ENCODE measurements at regions of chr11 and their contacts with region 1.

Region 1: DNA sequence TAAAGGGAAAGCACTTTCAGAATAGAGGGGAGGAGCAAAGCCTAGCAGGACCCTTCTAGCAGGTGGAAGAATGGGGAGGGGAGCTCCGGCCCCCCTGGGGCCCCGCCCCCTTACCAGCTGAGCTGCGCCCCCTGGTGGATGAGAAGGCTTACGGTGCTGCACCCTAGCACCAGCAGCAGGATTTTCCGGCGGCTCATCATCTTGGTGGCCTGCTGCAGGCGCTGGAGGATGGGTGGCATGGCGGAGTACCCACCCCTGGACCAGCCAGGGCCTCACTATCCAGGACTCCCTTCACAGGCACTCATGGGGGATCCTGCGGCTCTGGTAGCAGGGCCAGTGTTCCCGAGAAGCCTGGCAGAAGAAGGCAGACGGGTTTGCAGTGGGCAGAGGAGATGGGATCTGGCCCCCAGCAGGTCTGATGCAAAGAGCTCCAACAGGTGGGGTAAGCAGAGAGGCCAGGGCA is 3.8 kb downstream of the GAL3ST3 start:
- DNase-seq: no peak
- ATAC-seq: peak; percentile 92
- H3K4me3 ChIP-seq: no peak overlapping the region
- H3K27ac ChIP-seq: no peak overlapping the region
- H3K4me1 ChIP-seq: peaks cover 3% of the 10 kb centered on the region; the same call in 1 of the 2 replicates
- H3K27me3 ChIP-seq: no peaks in the 10 kb centered on the region
- CTCF ChIP-seq: peak; percentile 99

Region 2: DNA sequence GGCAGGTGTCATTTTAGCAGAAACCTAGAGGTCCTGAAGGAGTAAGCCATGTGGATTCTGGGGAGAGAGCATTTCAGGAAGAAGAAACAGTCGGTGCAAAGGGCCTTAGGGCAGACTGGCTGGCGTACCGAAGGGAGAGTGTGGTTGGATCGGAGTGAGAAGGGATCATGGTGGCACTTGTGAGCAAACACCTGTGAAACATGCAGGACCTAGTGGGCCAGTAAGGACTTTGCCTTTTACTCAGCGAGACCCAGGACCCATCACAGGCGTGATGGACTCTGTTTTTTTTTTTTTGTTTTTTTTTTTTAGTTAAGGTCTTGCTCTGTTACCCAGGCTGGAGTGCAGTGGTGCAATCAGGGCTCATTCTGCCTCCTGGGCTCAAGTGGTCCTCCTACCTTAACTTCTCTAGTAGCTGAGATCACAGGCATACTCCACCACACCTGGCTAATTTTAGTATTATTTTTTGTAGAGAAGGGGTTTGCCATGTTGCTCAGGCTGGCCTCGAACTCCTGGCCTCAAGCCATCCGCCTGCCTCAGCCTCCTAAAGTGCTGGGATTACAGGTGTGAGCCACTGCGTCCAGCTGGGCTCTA is 103.4 kb before region 1 on chr11:
- CTCF ChIA-PET with region 1: interaction called, 12 read pairs
- POLR2A ChIA-PET with region 1: no interaction called
- in situ Hi-C with region 1: no loop called
- intact Hi-C with region 1: no loop called
- DNase-seq: no peak
- ATAC-seq: no peak; the same call in 1 of the 2 replicates
- H3K4me3 ChIP-seq: no peak overlapping the region
- H3K27ac ChIP-seq: no peak overlapping the region
- H3K4me1 ChIP-seq: no peaks in the 10 kb centered on the region
- H3K27me3 ChIP-seq: no peaks in the 10 kb centered on the region
- CTCF ChIP-seq: no peak

Region 3: DNA sequence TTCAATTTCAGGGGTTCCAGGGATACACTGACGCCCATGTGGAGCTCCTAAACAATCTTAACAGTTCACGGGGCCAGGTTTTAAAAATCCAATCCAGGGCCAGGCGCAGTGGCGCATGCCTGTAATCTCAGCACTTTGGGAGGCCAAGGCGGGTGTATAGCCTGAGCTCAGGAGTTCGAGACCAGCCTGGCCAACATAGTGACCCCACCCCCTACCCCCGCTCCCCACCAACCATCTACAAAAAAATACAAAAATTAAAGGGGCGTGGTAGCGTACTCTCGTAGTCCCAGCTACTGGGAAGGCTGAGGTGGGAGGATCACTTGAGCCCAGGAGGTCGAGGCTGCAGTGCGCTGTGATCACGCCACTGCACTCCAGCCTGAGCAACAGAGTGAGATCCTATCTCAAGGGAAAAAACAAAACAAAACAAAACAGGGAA is 84.4 kb before region 1 on chr11:
- CTCF ChIA-PET with region 1: no interaction called
- POLR2A ChIA-PET with region 1: no interaction called
- in situ Hi-C with region 1: no loop called
- intact Hi-C with region 1: no loop called
- DNase-seq: no peak
- ATAC-seq: peak; percentile 26
- H3K4me3 ChIP-seq: peak overlapping the region; percentile 82 to 89
- H3K27ac ChIP-seq: peak overlapping the region; percentile 99
- H3K4me1 ChIP-seq: peaks cover 11% of the 10 kb centered on the region
- H3K27me3 ChIP-seq: no peaks in the 10 kb centered on the region
- CTCF ChIP-seq: no peak

Region 4: GRCh38 chr11:66032962-66033735 is 12.1 kb before region 1 on chr11:
- CTCF ChIA-PET with region 1: interaction called, 12 read pairs
- POLR2A ChIA-PET with region 1: no interaction called
- in situ Hi-C with region 1: no loop called
- intact Hi-C with region 1: no loop called
- DNase-seq: no peak
- ATAC-seq: peak; percentile 43
- H3K4me3 ChIP-seq: no peak overlapping the region
- H3K27ac ChIP-seq: no peak overlapping the region
- H3K4me1 ChIP-seq: no peaks in the 10 kb centered on the region
- H3K27me3 ChIP-seq: no peaks in the 10 kb centered on the region
- CTCF ChIP-seq: no peak

Region 5: GRCh38 chr11:66150140-66150539 is 104.9 kb after region 1 on chr11:
- CTCF ChIA-PET with region 1: interaction called, 15 read pairs
- POLR2A ChIA-PET with region 1: no interaction called
- in situ Hi-C with region 1: no loop called
- intact Hi-C with region 1: no loop called
- DNase-seq: no peak
- ATAC-seq: no peak
- H3K4me3 ChIP-seq: no peak overlapping the region
- H3K27ac ChIP-seq: no peak overlapping the region
- H3K4me1 ChIP-seq: no peaks in the 10 kb centered on the region; the same call in 1 of the 2 replicates
- H3K27me3 ChIP-seq: no peaks in the 10 kb centered on the region
- CTCF ChIP-seq: no peak

Region 6: GRCh38 chr11:67345920-67346799 is 1301.0 kb after region 1 on chr11:
- CTCF ChIA-PET with region 1: no interaction called
- POLR2A ChIA-PET with region 1: no interaction called
- in situ Hi-C with region 1: no loop called
- intact Hi-C with region 1: no loop called
- DNase-seq: peak; percentile 89
- ATAC-seq: peak; percentile 75
- H3K4me3 ChIP-seq: no peak overlapping the region
- H3K27ac ChIP-seq: no peak overlapping the region
- H3K4me1 ChIP-seq: peaks cover 4% of the 10 kb centered on the region; the same call in 1 of the 2 replicates
- H3K27me3 ChIP-seq: no peaks in the 10 kb centered on the region
- CTCF ChIP-seq: peak; percentile 94

Measured in Panc1 (cell line).